ENCODE measurements at regions of chr15 and their contacts with region 1.

Region 1: DNA sequence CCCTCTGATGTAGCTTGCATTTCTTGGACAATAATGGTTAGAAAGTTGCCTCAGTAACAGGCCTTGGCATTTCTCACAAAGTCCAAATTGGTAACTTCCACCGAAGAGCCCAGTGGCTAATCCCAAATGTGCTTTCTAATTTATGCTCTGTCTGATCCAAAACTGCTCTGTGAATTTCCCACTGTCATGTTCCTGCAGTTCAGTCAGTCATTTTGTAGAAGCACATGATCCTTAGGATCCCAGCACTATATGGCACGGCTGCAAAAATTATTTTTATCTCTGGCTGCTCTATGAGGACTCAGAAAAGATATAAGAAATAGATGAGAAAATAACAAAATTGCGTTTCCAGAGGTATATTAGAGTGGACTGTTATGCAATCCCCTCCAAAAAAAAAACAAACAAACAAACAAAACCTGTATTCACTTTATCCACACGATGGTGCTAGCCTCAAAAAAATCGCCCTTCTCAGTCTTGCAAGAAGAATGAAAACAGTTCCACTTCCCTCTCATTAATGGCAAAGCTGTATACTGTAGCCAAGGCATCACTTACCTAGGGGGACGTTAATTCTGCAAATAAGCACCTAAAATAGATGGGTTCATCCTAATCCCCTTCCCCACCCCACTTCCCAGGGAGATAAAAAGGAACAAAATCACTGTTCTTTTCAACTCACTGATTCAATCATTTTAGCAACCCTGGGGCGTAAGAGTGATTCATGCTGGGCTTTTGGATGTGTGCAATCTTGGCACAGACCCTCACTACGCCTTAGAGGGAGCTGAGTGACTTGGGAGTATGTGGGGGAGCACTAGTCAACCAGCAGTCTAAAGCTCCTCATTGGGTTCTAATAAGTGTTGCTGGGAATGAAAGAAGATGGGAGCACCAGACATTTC is 61.3 kb downstream of the TMCO5A start:
- DNase-seq: peak; percentile 25
- CTCF ChIP-seq: peak; percentile 57

Region 2: DNA sequence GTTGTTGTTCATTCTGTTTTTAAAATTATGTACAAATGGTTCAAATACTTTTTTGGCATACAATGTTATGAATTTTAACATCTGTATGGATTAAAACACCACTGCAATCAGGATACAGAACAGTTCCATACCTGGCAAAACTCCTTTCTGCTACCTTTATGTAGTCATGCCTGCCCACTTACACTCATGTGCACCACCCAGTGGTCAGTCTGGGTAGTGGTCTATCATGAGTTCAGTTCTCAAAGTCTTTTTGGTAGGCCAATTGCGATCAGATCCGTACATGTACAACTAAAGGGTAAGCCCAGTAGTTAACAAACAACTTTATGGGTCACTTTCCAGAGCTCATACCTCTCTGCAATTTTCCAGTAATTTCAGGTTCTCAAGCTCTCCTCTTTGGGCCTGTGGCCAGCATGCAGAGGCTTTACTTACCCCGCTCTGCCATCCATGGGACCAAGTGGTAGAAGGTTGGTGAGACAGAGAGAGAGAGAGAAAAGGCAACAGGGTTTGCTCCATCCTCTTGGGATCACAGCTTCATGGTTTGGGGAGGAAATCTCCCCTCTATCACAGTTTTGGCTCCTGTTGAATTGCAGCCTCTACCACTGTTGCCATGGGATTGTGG is 394.3 kb after region 1 on chr15:
- in situ Hi-C with region 1: loop called (anchors 10 kb)
- DNase-seq: peak; percentile 39
- CTCF ChIP-seq: peak; percentile 84